ENCODE measurements at regions of chr6 and their contacts with region 1.

Region 1: DNA sequence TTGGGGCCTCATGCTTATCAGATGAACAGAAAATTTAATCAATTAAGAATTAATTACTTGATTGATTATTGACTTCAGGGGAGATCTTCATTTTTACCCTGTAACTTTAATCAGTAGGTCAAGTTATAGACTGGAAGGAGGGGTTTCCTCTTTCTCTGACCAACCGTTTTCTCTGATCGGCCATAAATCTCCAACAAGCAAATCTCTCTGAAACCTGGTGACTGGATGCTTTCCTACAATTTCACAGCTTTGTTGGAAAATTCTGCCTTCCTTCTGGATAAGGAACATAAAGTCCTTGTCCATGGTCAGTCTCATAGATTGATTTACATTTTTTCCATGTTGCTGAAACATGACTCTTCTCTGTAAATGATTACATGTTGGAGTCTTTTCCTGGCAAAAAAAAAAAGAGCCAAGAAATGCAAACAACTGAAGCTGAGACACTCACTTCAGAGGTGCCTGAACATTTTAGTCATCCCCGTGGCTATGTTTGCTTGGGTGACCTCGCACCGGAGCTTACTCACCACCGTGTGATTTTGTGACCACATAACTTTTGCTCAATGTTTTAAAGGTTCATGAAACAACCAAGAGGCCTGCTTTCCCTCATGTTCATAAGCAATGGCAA is 31.0 kb downstream of the IRF4 start:
- DNase-seq: no peak
- ATAC-seq: peak; percentile 96
- H3K4me3 Mint-ChIP-seq: peak overlapping the region; percentile 7
- H3K27ac Mint-ChIP-seq: peak overlapping the region; percentile 75
- H3K4me1 Mint-ChIP-seq: peaks cover 15% of the 10 kb centered on the region
- H3K27me3 Mint-ChIP-seq: no peaks in the 10 kb centered on the region
- CTCF ChIP-seq: no peak

Region 2: GRCh38 chr6:408599-409102 is 13.9 kb before region 1 on chr6:
- CTCF ChIA-PET with region 1: no interaction called
- POLR2A ChIA-PET with region 1: interaction called, 10 read pairs
- intact Hi-C with region 1: no loop called
- DNase-seq: no peak
- ATAC-seq: no peak
- H3K4me3 Mint-ChIP-seq: peak overlapping the region; percentile 15
- H3K27ac Mint-ChIP-seq: peak overlapping the region; percentile 60
- H3K4me1 Mint-ChIP-seq: peaks cover 56% of the 10 kb centered on the region
- H3K27me3 Mint-ChIP-seq: no peaks in the 10 kb centered on the region
- CTCF ChIP-seq: no peak

Region 3: DNA sequence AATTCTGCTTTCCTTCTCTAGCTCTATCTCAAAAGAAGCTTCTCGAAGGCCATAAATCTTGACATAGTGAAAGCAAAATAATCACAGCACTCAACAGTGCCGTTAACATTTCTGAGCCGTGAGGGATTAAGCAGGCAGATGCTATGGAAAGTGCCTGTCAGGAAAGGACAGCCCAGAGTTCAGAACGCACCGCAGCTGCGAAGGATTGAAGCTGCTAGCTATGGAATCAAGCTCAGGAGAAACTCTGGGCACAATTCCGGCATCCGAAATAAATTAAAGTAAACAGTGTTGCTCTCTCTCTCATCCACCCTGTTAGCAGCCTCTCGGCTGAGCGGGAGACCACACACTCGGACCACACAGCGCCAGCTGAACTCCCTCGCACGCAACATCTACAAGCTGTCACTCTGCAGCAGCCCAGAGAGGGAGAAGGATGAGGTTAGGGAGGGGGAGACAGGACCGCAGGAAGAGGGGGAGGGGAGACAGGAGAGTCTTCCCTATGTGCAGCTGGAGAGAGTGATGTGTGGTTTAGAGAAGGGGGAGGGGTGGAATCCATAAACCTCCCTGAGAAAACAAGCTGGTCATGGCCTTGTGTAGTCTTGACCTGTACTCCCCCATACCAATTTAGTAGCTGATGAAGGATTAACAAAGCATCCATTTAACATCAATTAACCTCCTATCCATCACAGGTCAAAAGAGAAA is 261.3 kb after region 1 on chr6:
- CTCF ChIA-PET with region 1: no interaction called
- POLR2A ChIA-PET with region 1: no interaction called
- intact Hi-C with region 1: no loop called
- DNase-seq: no peak
- ATAC-seq: no peak
- H3K4me3 Mint-ChIP-seq: no peak overlapping the region
- H3K27ac Mint-ChIP-seq: no peak overlapping the region
- H3K4me1 Mint-ChIP-seq: peaks cover 33% of the 10 kb centered on the region
- H3K27me3 Mint-ChIP-seq: no peaks in the 10 kb centered on the region
- CTCF ChIP-seq: no peak

Measured in activated B cell treated with CpG ODN at 0.5 μM for 24 hours (primary cell).